ENCODE measurements at regions of chr1 and their contacts with region 1.

Region 1: GRCh38 chr1:27979151-27979858 is 19.5 kb downstream of the XKR8 start:
- DNase-seq: peak in 1 of 4 donors; percentile 32
- ATAC-seq: peak; percentile 81
- H3K4me3 ChIP-seq: no peak overlapping the region
- H3K27ac ChIP-seq: no peak overlapping the region
- H3K4me1 ChIP-seq: peaks cover 7% of the 10 kb centered on the region
- H3K27me3 ChIP-seq: no peaks in the 10 kb centered on the region
- CTCF ChIP-seq: peak in 6 of 7 experiments; percentile 29 to 68 (median 60)
- POLR2A ChIP-seq: no peak

Region 2: DNA sequence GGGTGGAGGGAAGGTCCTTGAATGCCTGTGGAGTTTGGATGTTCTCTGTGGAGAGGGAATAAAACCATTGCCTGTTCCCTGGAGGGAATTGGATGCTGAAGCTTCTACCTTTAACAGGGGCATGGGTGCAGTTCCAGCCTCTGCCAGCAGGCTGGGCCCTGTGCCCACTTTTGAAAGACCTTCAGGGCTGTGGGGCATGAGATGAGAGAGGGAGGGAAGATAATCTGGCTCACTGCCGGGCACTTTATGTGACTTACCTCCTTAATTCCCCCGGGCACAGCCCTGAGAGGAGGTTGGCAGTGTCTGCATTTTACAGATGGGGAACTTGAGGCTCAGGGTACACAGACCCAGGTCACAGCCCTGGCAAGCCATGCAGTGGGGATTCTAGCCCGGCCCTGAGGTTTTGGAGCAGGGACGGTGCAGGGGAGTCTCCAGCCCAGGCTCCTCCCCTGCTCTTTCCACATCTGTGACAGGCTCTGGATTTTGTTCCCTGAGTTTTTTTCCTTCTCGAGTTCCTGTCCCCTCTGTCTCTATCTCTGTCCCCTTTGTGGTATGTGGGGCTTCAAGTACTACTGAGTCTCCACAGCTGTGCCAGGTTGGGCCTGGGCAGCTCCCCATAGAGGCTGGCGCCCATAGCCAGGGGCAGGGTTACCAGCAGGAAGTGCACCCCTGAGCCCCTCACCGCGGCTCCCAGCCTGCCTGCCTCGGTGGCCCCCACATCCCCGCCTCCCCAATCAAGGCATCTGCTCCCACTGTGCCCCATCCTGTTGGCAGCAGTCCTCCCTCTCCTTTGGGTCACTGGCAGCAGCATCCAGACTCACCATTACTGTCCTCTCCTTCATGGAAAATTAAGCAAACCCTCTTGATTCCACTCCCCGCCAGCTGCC is 121.0 kb before region 1 on chr1:
- intact Hi-C with region 1: loop called (anchors 5 kb)
- DNase-seq: peak; percentile 86 to 91 (median 87)
- ATAC-seq: peak; percentile 90
- H3K4me3 ChIP-seq: no peak overlapping the region
- H3K27ac ChIP-seq: no peak overlapping the region
- H3K4me1 ChIP-seq: peaks cover 4% of the 10 kb centered on the region
- H3K27me3 ChIP-seq: no peaks in the 10 kb centered on the region
- CTCF ChIP-seq: peak; percentile 74 to 94 (median 92)
- POLR2A ChIP-seq: peak in 1 of 3 donors; percentile 8

Measured in body of pancreas (tissue), 4 donors.